ENCODE measurements at regions of chr1 and their contacts with region 1.

Region 1: GRCh38 chr1:40040511-40041465 is at the start of gene CAP1:
- DNase-seq: peak; percentile 99 to 100 (median 100)
- ATAC-seq: peak; percentile 97
- H3K4me3 ChIP-seq: peak within 1 kb of the TSS; percentile 99
- H3K4me3 Mint-ChIP-seq: peak within 1 kb of the TSS; percentile 90 to 99 (median 98)
- H3K27ac ChIP-seq: peak within 1 kb of the TSS; percentile 91
- H3K27ac Mint-ChIP-seq: peak within 1 kb of the TSS; percentile 85 to 99 (median 97)
- H3K4me1 ChIP-seq: peaks cover 49 to 51% of the 10 kb centered on the region in 2 donors
- H3K4me1 Mint-ChIP-seq: peaks cover 54 to 82% (median 72%) of the 10 kb centered on the region in 7 donors
- H3K27me3 ChIP-seq: no peaks in the 10 kb centered on the region
- H3K27me3 Mint-ChIP-seq: no peaks in the 10 kb centered on the region
- total RNA-seq, gene CAP1: 176 to 683 (median 282) TPM

Region 2: GRCh38 chr1:39691262-39692151 is 349.3 kb before region 1 on chr1 and contains the start of gene HPCAL4:
- CTCF ChIA-PET with region 1: no interaction called
- POLR2A ChIA-PET with region 1: no interaction called
- intact Hi-C with region 1: loop called in 1 of 2 experiments (anchors 1 kb)
- DNase-seq: peak; percentile 79 to 93 (median 88)
- ATAC-seq: peak; percentile 93
- H3K4me3 ChIP-seq: peak within 1 kb of the TSS; percentile 89
- H3K4me3 Mint-ChIP-seq: peak within 1 kb of the TSS; percentile 71 to 90 (median 86)
- H3K27ac ChIP-seq: peak within 1 kb of the TSS; percentile 69
- H3K27ac Mint-ChIP-seq: peak within 1 kb of the TSS; percentile 60 to 93 (median 84)
- H3K4me1 ChIP-seq: peaks cover 21 to 36% of the 10 kb centered on the region in 2 donors
- H3K4me1 Mint-ChIP-seq: peaks cover 22 to 48% (median 28%) of the 10 kb centered on the region in 7 donors
- H3K27me3 ChIP-seq: no peaks in the 10 kb centered on the region
- H3K27me3 Mint-ChIP-seq: peaks cover 0 to 63% (median 13%) of the 10 kb centered on the region in 5 donors
- total RNA-seq, gene HPCAL4: 2.9 to 49.0 (median 18.7) TPM

Region 3: GRCh38 chr1:40059338-40059959 is 18.7 kb after region 1 on chr1:
- CTCF ChIA-PET with region 1: interaction called, 5 read pairs
- POLR2A ChIA-PET with region 1: interaction called, 306 read pairs
- intact Hi-C with region 1: loop called (anchors 1 kb)
- DNase-seq: peak in 7 of 9 donors; percentile 33 to 65 (median 56)
- ATAC-seq: peak; percentile 83
- H3K4me3 ChIP-seq: peak overlapping the region; percentile 21
- H3K4me3 Mint-ChIP-seq: peak overlapping the region; percentile 65 to 90 (median 82)
- H3K27ac ChIP-seq: peak overlapping the region; percentile 77
- H3K27ac Mint-ChIP-seq: peak overlapping the region; percentile 79 to 97 (median 88)
- H3K4me1 ChIP-seq: peaks cover 64 to 87% of the 10 kb centered on the region in 2 donors
- H3K4me1 Mint-ChIP-seq: peaks cover 79 to 99% (median 91%) of the 10 kb centered on the region in 7 donors
- H3K27me3 ChIP-seq: no peaks in the 10 kb centered on the region
- H3K27me3 Mint-ChIP-seq: no peaks in the 10 kb centered on the region

Region 4: DNA sequence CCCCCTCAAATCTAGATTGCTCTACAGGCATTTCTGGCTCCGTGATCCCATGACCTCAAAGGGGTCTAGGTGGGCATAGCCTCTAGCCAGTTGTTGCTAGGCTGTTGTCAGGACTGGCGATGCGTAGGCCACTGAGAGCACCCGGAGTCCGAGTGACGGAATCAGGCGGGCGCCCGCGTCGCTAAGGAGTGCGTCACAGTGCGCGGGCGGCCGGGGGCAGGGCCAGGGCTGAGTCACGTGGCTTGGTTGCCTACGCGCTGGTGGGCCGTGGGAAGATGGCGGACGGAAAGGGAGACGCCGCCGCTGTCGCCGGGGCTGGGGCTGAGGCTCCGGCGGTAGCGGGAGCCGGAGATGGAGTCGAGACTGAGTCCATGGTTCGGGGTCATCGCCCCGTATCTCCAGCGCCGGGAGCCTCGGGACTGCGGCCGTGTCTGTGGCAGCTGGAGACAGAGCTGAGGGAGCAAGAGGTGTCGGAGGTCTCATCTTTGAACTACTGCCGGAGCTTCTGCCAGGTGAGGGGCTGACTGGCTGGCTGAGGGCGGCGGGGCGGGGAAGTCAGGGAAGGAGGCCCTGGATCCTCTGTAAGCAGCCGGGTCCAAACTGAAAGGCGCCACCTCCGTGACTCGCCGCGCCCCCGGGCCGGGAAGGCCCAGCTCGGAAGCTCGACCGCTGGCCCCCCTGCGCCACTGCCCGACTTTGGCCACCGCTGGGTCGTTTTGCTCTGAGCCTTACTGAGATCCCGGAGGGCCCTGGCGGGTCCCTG is 120.5 kb after region 1 on chr1 and contains the start of gene RLF:
- CTCF ChIA-PET with region 1: no interaction called
- POLR2A ChIA-PET with region 1: no interaction called
- intact Hi-C with region 1: loop called (anchors 1 kb)
- DNase-seq: peak; percentile 91 to 97 (median 95)
- ATAC-seq: peak; percentile 99
- H3K4me3 ChIP-seq: peak within 1 kb of the TSS; percentile 76
- H3K4me3 Mint-ChIP-seq: no peak within 1 kb of the TSS
- H3K27ac ChIP-seq: peak within 1 kb of the TSS; percentile 88
- H3K27ac Mint-ChIP-seq: peak within 1 kb of the TSS in 2 of 9 donors; percentile 99 to 100
- H3K4me1 ChIP-seq: peaks cover 22 to 25% of the 10 kb centered on the region in 2 donors
- H3K4me1 Mint-ChIP-seq: peaks cover 5 to 19% (median 7%) of the 10 kb centered on the region in 7 donors
- H3K27me3 ChIP-seq: no peaks in the 10 kb centered on the region
- H3K27me3 Mint-ChIP-seq: no peaks in the 10 kb centered on the region
- total RNA-seq, gene RLF: 20.9 to 28.6 (median 24.7) TPM

Region 5: GRCh38 chr1:40338745-40339424 is 298.1 kb after region 1 on chr1:
- CTCF ChIA-PET with region 1: interaction called, 3 read pairs
- POLR2A ChIA-PET with region 1: no interaction called
- intact Hi-C with region 1: loop called in 1 of 2 experiments (anchors 1 kb)
- DNase-seq: peak; percentile 81 to 91 (median 87)
- ATAC-seq: peak; percentile 99
- H3K4me3 ChIP-seq: no peak overlapping the region
- H3K4me3 Mint-ChIP-seq: peak overlapping the region; percentile 37 to 76 (median 57)
- H3K27ac ChIP-seq: no peak overlapping the region
- H3K27ac Mint-ChIP-seq: peak overlapping the region in 8 of 9 donors; percentile 16 to 86 (median 70)
- H3K4me1 ChIP-seq: peaks cover 6 to 35% of the 10 kb centered on the region in 2 donors
- H3K4me1 Mint-ChIP-seq: peaks cover 33 to 50% (median 49%) of the 10 kb centered on the region in 7 donors
- H3K27me3 ChIP-seq: no peaks in the 10 kb centered on the region
- H3K27me3 Mint-ChIP-seq: no peaks in the 10 kb centered on the region

Region 6: DNA sequence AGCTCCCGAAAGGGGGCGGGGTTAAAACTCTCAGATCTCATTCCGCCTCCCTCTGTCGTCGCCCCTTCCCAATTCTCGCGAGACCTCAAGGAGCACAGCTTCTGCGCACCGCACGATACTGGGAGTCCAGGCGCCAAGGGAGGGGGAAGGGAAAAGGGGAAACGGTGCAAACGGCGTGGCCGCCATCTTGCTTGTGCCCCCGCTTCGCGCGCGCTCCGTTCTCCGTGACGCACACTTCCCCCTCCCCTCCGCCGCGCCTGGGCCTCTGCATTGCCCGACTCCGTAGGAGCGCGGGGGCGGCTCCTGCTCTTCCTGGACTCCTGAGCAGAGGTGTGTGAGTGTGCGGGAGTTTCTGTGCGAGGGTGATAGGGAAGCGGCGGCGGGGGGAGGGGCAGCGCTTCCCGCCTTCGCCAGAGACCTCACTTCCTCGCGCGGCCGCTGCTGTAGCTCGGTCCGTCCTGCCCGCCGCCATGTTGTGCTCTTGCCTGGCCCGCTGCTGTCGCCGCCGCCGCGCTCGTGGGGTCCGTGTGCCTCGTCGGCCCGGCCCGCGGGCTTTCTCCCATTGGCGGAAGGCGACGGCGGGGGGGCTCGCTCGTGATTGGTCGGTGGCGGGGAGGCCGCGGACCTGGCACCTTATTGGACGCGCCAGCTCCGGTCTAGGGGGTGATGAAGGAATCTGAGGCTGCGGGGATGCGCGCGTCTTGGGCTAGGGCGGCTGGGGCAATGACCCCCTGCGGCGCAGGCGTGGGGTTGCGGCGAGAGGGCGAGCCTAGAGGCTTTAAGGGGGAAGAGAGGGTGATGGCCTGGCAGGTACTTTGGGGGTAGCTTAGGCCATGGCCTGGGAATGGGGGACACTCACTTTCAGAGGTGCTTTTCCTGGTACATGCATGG is 651.0 kb after region 1 on chr1 and contains the start of gene NFYC:
- CTCF ChIA-PET with region 1: no interaction called
- POLR2A ChIA-PET with region 1: interaction called, 3 read pairs
- intact Hi-C with region 1: loop called (anchors 1 to 5 kb)
- DNase-seq: peak; percentile 82 to 97 (median 96)
- ATAC-seq: peak; percentile 89
- H3K4me3 ChIP-seq: peak within 1 kb of the TSS; percentile 81
- H3K4me3 Mint-ChIP-seq: peak within 1 kb of the TSS; percentile 91 to 98 (median 95)
- H3K27ac ChIP-seq: peak within 1 kb of the TSS; percentile 99
- H3K27ac Mint-ChIP-seq: peak within 1 kb of the TSS; percentile 91 to 99 (median 97)
- H3K4me1 ChIP-seq: peaks cover 30 to 38% of the 10 kb centered on the region in 2 donors
- H3K4me1 Mint-ChIP-seq: peaks cover 29 to 73% (median 64%) of the 10 kb centered on the region in 7 donors
- H3K27me3 ChIP-seq: no peaks in the 10 kb centered on the region
- H3K27me3 Mint-ChIP-seq: no peaks in the 10 kb centered on the region
- total RNA-seq, gene NFYC: 44.2 to 88.5 (median 73.6) TPM

Measured in naive thymus-derived CD4-positive, alpha-beta T cell (primary cell).